Ascending aorta (tissue), 2 donors: ENCODE measurements at regions of chr17 and their contacts with region 1.

Region 1: DNA sequence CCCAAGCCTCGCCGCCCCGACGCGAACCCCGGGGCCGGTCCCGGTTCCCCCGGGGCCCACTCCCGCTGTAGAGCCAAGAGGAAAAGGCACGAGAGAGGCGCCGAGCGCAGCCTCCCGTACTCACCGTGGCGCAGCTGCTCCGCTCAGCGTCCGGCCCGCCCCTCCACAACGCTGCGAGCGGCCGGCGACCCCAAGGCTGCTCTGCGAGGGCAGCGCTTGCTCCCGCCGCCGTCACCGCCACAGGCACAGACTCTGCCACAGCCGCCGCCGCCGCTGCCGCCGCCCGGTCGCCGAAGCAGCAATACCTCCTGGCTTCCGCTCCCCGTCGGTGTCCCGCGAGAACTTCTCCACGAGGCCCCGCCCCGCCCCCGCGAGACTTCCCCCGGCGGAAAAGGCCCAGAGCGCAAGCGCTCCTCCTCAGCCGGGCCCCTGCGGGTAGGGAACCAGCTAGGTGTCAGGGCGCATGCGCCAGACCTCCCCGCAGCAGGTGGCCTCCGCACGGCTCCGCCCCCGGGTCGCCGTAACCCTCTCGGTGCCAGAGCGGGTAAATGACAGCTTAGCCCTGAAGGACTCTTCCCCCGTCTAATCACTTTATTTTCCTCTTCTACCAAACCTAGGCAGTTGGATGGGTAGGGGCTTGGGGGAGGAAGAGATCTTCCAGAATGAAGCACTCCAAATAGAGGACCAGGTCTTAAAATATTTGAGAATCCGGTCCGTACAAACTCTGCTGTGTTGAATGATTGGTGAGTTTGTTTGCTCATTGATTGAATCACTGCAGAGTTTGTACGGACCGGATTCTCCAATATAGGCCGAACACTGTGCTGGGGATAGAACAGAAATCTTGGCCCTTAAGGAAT is at the start of gene GRB2:
- DNase-seq: peak; percentile 90 to 99
- H3K4me3 ChIP-seq: peak within 1 kb of the TSS; percentile 70 to 96
- H3K27ac ChIP-seq: peak within 1 kb of the TSS; percentile 84 to 94
- H3K4me1 ChIP-seq: peaks cover 12 to 24% of the 10 kb centered on the region in 2 donors
- H3K27me3 ChIP-seq: no peaks in the 10 kb centered on the region
- CTCF ChIP-seq: no peak
- total RNA-seq, gene GRB2: 65.7 TPM

Region 2: DNA sequence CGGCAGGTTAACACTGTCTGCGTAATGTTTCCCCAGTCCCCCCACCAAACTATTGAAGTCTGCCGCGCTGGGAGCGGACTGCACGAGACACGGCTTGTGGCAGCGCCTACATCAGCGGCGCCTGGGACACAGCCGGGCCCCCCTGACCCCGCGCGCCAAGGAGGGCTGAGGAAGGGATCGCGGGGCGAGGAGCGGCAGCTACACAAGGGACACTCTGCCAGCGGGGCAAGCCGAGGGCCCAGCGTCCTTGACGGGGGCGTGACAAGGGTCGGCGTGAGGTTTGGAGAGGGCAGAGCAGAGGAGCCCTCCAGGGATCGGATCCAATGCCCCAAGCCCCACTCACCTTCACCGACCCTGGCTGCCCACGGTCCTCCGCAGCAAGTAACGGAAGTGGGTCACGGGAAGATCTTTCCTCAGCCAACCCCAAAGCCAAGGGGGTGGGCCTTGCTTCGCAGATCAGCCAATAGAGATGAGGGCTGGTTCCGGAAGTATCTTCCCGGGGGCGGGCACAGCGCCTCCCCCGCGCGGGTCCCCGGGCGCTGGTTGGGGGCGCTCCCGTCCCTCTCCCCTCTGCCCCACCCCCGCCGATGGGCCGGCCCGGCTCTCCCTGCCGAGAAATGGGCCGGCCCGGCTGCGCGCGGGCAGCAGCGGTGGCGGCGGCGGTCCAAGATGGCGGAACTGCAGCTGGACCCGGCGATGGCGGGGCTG is 358.9 kb before region 1 on chr17 and contains the starts of genes ATP5PD and KCTD2:
- intact Hi-C with region 1: loop called (anchors 1 kb)
- DNase-seq: peak; percentile 88 to 98
- H3K4me3 ChIP-seq: peak within 1 kb of the TSS; percentile 64 to 74
- H3K27ac ChIP-seq: peak within 1 kb of the TSS; percentile 90
- H3K4me1 ChIP-seq: peaks cover 9 to 13% of the 10 kb centered on the region in 2 donors
- H3K27me3 ChIP-seq: no peaks in the 10 kb centered on the region
- CTCF ChIP-seq: no peak
- total RNA-seq, gene ATP5PD: 133 TPM
- total RNA-seq, gene KCTD2: 31.4 TPM

Region 3: DNA sequence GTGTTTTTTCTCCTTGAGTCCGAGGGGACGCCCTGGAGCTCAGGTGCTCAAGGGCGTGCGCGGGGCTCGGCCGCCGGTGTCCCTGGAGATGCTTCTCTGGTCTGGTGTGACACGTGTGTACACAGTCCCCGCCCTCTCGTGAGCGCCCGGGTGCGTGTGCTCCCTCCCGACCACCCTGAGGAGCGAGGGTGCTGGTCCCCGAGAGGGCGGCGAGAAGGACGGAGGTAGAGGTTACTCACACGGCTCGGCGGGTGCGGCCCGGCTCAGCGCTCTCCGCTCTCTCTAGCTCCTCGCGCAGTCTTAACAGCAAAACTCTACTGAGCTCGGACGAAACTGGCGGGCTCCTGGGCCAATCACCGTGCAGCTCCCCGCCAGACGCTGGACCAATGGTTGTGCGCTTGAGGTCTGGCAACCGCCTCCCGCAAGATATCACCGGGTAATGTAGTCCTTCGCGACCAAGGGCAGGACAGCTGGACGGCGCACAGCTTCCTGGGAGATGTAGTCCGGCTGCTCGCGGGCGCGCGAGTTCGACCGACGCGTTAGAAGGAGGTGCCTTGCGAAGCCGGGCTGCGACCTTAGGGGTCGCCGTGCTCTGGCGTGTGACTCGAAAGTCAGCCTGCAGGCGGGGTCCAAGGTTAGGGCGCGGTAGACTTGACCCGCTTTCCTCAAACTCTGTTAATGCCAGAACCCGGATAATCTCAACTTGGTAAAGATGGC is 116.3 kb before region 1 on chr17 and contains the start of gene SLC25A19:
- intact Hi-C with region 1: loop called (anchors 1 kb)
- DNase-seq: peak; percentile 94 to 99
- H3K4me3 ChIP-seq: peak within 1 kb of the TSS; percentile 69 to 80
- H3K27ac ChIP-seq: peak within 1 kb of the TSS; percentile 86 to 90
- H3K4me1 ChIP-seq: no peaks in the 10 kb centered on the region
- H3K27me3 ChIP-seq: no peaks in the 10 kb centered on the region
- CTCF ChIP-seq: peak in 1 of 3 experiments; percentile 9
- total RNA-seq, gene SLC25A19: 1.3 TPM

Region 4: GRCh38 chr17:75371339-75371738 is 34.3 kb before region 1 on chr17:
- intact Hi-C with region 1: loop called (anchors 5 kb)
- DNase-seq: no peak
- H3K4me3 ChIP-seq: no peak overlapping the region
- H3K27ac ChIP-seq: peak overlapping the region; percentile 59 to 82
- H3K4me1 ChIP-seq: peaks cover 3 to 32% of the 10 kb centered on the region in 2 donors
- H3K27me3 ChIP-seq: no peaks in the 10 kb centered on the region
- CTCF ChIP-seq: no peak

Region 5: DNA sequence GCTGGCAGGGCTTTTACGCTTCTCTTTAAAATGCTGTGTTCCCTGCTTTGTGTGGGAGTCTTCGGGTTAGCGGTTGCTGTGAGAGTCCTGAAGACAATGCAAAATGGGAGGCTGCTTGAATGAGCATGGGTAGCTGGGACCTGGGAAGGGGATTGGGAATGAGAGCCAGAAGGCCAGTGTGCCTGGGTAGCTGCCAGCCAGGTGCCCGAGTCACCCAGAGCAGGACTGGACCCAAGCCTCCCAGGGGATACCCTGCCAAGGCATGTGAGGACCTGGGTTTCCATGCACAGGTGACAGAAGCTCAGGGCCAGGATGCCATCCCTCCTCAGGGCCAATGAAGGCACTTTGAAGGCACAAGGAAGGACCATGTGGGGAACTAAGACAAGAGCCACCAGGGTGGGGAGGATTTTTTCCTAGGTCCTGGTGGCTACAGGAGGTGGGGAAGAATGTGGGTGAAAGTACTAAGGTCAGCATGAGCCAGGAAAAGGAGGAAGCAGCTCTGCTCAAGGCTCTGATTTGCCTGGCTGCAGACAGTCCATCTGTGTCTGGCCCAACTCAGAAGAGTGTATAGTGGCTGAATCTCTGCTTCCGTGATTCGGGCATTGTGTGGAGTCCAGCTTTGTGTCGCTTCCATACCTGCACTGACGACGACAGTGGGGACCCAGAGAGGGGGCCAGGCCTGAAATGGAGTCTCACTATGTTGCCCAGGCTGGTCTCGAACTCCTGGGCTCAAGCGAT is 71.3 kb after region 1 on chr17:
- intact Hi-C with region 1: no loop called
- DNase-seq: no peak
- H3K4me3 ChIP-seq: peak overlapping the region in 1 of 2 donors; percentile 45
- H3K27ac ChIP-seq: peak overlapping the region; percentile 80 to 85
- H3K4me1 ChIP-seq: peaks cover 9 to 25% of the 10 kb centered on the region in 2 donors
- H3K27me3 ChIP-seq: no peaks in the 10 kb centered on the region
- CTCF ChIP-seq: no peak

Region 6: GRCh38 chr17:75515496-75516254 is 110.1 kb after region 1 on chr17 and contains the start of gene CASKIN2:
- intact Hi-C with region 1: loop called (anchors 1 kb)
- DNase-seq: peak; percentile 77 to 96
- H3K4me3 ChIP-seq: peak within 1 kb of the TSS; percentile 78 to 82
- H3K27ac ChIP-seq: peak within 1 kb of the TSS; percentile 74 to 88
- H3K4me1 ChIP-seq: peaks cover 25 to 41% of the 10 kb centered on the region in 2 donors
- H3K27me3 ChIP-seq: no peaks in the 10 kb centered on the region
- CTCF ChIP-seq: peak; percentile 99 to 100 (median 99)
- total RNA-seq, gene CASKIN2: 112 TPM